GM12878 (cell line): ENCODE measurements at regions of chr5 and their contacts with region 1.

Region 1: DNA sequence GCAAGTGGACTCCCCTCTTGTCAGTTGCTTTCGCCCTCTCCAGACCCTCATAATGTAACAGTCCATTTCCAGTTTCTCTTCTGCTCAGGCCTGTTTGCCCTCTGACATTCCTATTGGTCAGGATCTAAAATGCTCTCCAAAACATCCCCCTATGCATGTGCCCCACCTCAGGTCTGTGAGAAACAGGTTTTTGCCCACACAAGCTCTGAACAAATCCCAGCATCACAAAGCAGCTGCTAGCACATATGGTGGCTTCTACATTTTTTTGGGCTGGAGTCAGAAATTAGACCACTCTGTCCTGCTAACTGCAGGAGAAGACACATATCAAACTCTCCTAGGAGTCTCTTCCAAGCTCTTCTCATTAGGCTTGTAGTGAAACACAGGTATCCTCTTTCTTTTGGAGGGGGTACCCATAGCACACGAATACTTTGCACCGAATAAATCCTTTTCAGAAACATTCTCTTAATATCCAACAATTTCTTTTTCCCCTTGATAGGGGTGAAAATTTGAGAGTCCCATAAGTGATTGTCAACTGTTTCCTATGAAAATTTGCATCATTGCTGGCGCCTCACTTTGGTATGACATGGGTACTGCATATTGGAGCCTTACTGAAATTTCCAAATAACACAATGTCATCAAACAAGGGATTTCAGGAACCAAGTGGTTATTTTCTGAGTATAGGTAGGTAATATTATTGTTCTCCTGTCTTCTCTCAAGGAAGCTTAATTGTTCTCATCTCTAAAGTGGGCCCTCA is 19.3 kb upstream of the HSPA9 start:
- DNase-seq: no peak
- ATAC-seq: no peak; the same call in 2 of the 3 replicates
- H3K4me3 ChIP-seq: no peak overlapping the region
- H3K27ac ChIP-seq: no peak overlapping the region
- H3K4me1 ChIP-seq: no peaks in the 10 kb centered on the region
- H3K27me3 ChIP-seq: no peaks in the 10 kb centered on the region
- CTCF ChIP-seq: peak; percentile 4 to 44 (median 35); a peak in 1 of 6 replicates
- EP300 ChIP-seq: no peak
- POLR2A ChIP-seq: no peak
- RAD21 ChIP-seq: no peak

Region 2: GRCh38 chr5:138583984-138584637 is 10.4 kb before region 1 on chr5:
- CTCF ChIA-PET with region 1: interaction called, 17 read pairs
- POLR2A ChIA-PET with region 1: interaction called, 3 read pairs
- RAD21 ChIA-PET with region 1: interaction called, 5 read pairs
- SMC1A ChIA-PET with region 1: interaction called, 5 read pairs
- in situ Hi-C with region 1: no loop called
- intact Hi-C with region 1: no loop called
- DNase-seq: no peak
- ATAC-seq: no peak
- H3K4me3 ChIP-seq: no peak overlapping the region
- H3K27ac ChIP-seq: no peak overlapping the region
- H3K4me1 ChIP-seq: no peaks in the 10 kb centered on the region
- H3K27me3 ChIP-seq: no peaks in the 10 kb centered on the region; a peak in 1 of 4 replicates
- CTCF ChIP-seq: no peak
- EP300 ChIP-seq: no peak
- POLR2A ChIP-seq: no peak
- RAD21 ChIP-seq: no peak

Region 3: DNA sequence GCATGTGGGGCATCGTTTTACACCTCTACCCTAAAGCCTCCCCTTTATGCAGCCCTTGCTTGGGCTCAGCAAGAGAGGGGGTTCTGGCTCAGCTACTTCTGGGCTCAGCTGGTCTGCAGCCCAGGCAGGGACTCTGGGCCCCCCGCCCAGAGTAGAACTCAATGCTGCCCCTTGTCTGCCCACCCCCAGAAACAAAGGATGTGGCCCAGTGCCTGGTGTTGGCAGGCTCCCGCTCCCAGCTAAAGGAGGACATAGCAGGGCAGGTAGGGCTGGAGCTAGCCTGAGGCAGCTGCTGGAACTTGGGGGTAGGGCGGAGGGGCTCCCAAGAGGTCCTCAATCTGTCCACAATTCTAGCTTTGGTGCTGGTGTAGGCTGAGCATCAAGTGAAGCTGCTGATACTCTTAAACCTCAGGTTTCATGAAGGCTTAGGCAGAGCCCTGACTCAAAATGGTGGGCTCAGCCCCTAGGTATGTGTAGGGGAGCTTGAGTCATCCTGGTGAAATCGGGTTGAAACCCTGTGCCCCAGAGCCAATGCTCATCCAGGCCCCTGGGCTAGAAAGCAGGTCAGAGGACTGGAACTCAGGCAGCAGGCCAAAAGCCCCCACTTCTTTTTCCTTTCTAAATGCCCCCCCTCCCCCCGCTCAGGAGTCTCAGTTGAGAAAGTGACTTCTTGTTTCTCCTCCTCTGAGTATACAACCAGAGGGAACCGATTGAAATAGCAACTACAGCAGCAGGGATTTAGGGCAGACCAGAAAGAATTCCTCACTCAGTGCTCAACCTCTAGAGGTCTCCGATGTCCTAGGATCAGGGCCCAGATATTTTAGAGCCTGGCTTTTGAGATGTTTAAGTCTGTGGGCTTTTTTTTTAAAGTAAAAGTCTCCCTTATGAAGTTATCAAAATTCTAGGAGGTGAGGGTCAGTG is 1212.5 kb after region 1 on chr5:
- CTCF ChIA-PET with region 1: no interaction called
- POLR2A ChIA-PET with region 1: no interaction called
- RAD21 ChIA-PET with region 1: no interaction called
- SMC1A ChIA-PET with region 1: no interaction called
- in situ Hi-C with region 1: no loop called
- intact Hi-C with region 1: no loop called
- DNase-seq: no peak
- ATAC-seq: no peak
- H3K4me3 ChIP-seq: no peak overlapping the region
- H3K27ac ChIP-seq: no peak overlapping the region
- H3K4me1 ChIP-seq: no peaks in the 10 kb centered on the region
- H3K27me3 ChIP-seq: peaks cover 0 to 3% of the 10 kb centered on the region in 2 experiments; a peak in 2 of 4 replicates
- CTCF ChIP-seq: no peak
- EP300 ChIP-seq: no peak
- POLR2A ChIP-seq: no peak
- RAD21 ChIP-seq: no peak